ENCODE measurements at regions of chr6 and their contacts with region 1.

Region 1: GRCh38 chr6:25278914-25279747 is at the start of gene CARMIL1:
- DNase-seq: peak; percentile 84
- total RNA-seq, gene CARMIL1: 7.5 TPM

Region 2: DNA sequence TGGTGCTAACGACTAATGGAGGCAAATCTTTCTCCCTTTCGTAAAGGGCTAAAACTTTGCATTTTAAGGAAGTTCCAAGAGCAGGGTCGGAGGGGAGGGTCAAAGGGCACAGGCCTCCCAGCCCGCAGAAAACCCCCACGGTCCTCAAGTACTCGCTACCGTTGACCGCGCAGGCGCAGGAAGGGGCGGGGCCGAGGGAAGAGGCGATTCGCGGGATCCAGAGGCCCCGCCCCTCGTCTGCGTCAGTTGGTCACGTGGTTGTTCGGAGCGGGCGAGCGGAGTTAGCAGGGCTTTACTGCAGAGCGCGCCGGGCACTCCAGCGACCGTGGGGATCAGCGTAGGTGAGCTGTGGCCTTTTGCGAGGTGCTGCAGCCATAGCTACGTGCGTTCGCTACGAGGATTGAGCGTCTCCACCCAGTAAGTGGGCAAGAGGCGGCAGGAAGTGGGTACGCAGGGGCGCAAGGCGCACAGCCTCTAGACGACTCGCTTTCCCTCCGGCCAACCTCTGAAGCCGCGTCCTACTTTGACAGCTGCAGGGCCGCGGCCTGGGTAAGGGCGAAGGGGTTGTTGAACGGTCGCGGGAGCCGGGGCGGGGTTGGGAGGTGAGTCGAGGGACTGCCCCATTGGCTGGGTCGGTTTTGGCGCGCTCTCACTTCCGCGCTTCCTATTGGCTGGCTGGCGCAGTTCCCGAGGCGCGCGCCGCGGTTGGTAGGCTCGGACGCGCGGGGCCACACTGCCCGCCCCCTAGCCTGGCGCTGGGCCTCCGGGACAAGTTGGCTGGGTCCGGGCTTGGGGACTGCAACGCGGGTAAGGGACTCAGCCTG is 504.2 kb before region 1 on chr6 and contains the start of gene GMNN:
- intact Hi-C with region 1: no loop called
- DNase-seq: peak; percentile 99
- total RNA-seq, gene GMNN: 3.7 TPM

Region 3: GRCh38 chr6:25070547-25071366 is 208.4 kb before region 1 on chr6:
- intact Hi-C with region 1: no loop called
- DNase-seq: peak; percentile 88

Region 4: GRCh38 chr6:25490018-25490801 is 211.1 kb after region 1 on chr6:
- intact Hi-C with region 1: loop called (anchors 1 kb)
- DNase-seq: peak; percentile 83

Region 5: DNA sequence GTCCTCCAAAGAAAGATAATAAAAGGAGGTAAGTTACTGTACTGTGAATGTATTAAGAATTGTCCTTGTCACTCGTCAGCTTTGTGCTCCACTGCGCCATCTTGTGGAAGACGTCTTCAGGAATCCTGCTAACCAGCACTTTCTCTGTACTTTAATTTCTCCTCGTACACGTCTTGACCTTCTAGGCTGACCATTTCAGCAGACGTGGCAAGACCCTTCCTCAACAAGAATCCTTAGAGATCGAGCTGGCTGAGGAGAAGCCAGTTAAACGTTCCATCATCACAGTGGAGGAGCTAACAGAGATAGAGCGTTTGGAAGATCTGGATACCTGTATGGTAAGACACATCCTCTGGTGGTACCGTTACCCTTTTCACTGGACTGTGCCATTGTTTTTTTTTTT is 277.4 kb after region 1 on chr6:
- intact Hi-C with region 1: loop called (anchors 5 kb)
- DNase-seq: peak; percentile 78

Region 6: GRCh38 chr6:25601800-25602673 is 322.9 kb after region 1 on chr6:
- intact Hi-C with region 1: loop called (anchors 5 kb)
- DNase-seq: no peak